ENCODE measurements at regions of chr17 and their contacts with region 1.

Region 1: GRCh38 chr17:80254396-80255251 is 6.0 kb upstream of the RNF213 start:
- DNase-seq: peak; percentile 86
- H3K4me3 Mint-ChIP-seq: peak overlapping the region; percentile 41
- H3K27ac Mint-ChIP-seq: peak overlapping the region; percentile 92
- H3K4me1 Mint-ChIP-seq: peaks cover 71% of the 10 kb centered on the region
- H3K27me3 Mint-ChIP-seq: no peaks in the 10 kb centered on the region

Region 2: DNA sequence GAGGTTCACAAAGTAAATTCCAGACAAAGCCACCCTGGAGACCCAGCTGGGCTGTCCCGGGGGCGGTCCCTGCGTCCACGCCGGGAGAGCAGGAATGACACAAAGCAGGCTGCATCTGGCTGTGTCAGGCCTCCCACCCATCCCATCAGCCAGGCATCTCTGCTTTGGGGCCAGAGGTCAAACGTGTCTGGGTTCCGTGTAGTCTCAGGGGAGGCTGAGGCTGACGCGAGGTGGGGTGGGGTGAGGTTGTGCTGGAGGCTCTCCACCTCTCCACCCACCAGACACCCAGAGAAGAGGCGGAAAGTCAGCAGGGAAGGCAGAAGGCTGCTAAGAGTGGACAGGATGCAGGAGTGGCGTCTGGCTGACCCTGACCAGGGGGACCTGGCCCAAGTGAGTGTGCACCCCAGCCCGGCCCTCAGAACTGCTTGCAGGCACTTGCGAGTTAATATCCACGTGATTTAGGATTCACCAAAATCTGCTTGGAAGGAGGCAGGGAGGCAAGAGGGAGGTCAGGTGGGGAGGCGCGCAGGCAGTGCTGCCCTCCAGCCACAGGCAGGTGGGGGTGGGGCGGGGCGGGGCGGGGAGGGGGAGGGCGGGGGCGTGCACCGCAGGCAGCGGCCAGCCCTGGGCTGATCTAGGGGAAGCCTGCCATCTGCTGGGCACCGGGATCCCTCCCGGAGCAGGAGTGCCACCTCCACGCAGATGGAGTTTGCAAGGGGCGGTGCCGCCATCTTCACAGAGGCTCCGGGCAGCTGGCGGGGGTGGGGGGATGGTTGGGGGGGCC is 263.3 kb before region 1 on chr17:
- CTCF ChIA-PET with region 1: no interaction called
- POLR2A ChIA-PET with region 1: no interaction called
- intact Hi-C with region 1: loop called (anchors 1 kb)
- DNase-seq: peak; percentile 91
- H3K4me3 Mint-ChIP-seq: peak overlapping the region; percentile 71
- H3K27ac Mint-ChIP-seq: no peak overlapping the region
- H3K4me1 Mint-ChIP-seq: peaks cover 26% of the 10 kb centered on the region
- H3K27me3 Mint-ChIP-seq: no peaks in the 10 kb centered on the region

Region 3: DNA sequence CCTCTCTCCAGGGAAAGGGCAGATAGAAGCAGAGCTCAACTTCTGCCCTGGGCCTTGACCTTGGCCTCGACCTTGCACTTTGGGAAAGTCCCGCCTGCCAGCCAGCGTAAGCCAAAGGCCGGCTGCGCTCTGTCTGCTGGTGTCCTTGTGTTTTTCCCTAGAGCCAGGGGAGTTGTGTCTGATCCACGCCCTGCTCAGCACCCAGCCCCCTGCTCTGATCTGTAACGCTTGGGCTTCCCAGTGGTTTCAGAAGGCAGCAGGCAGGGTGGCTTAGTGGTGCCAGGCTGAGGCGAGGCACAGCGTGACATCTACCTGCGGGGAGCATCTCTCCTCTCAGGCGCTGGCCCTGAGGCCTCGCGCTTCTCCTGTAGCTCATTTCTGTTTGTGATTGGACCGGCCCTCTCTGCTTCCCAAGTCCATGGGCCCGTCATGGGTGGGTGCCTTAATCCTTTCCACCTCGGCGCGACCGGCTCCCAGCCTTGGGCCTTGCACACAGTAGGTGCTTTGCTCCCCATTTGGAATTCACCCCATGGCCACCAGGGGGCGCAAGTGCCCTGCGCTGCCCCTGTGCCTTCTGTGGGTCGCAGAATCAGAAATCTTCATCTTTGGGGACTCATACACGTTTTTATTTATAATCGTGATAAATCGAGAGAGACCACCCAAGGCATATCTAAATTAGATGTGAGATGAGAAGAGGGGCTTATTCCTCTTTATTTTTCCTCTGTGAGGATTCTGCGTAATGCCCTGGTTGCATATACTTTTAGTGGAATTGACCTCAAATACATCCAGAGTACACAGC is 58.7 kb before region 1 on chr17:
- CTCF ChIA-PET with region 1: interaction called, 41 read pairs
- POLR2A ChIA-PET with region 1: no interaction called
- intact Hi-C with region 1: loop called (anchors 1 kb)
- DNase-seq: peak; percentile 65
- H3K4me3 Mint-ChIP-seq: no peak overlapping the region
- H3K27ac Mint-ChIP-seq: no peak overlapping the region
- H3K4me1 Mint-ChIP-seq: peaks cover 2% of the 10 kb centered on the region
- H3K27me3 Mint-ChIP-seq: peaks cover 7% of the 10 kb centered on the region

Region 4: GRCh38 chr17:80468242-80468641 is 213.6 kb after region 1 on chr17:
- CTCF ChIA-PET with region 1: no interaction called
- POLR2A ChIA-PET with region 1: no interaction called
- intact Hi-C with region 1: no loop called
- DNase-seq: no peak
- H3K4me3 Mint-ChIP-seq: no peak overlapping the region
- H3K27ac Mint-ChIP-seq: no peak overlapping the region
- H3K4me1 Mint-ChIP-seq: peaks cover 6% of the 10 kb centered on the region
- H3K27me3 Mint-ChIP-seq: peaks cover 54% of the 10 kb centered on the region

Region 5: GRCh38 chr17:81094509-81095382 is 840.1 kb after region 1 on chr17:
- CTCF ChIA-PET with region 1: no interaction called
- POLR2A ChIA-PET with region 1: no interaction called
- intact Hi-C with region 1: loop called (anchors 10 kb)
- DNase-seq: peak; percentile 97
- H3K4me3 Mint-ChIP-seq: no peak overlapping the region
- H3K27ac Mint-ChIP-seq: peak overlapping the region; percentile 75
- H3K4me1 Mint-ChIP-seq: peaks cover 46% of the 10 kb centered on the region
- H3K27me3 Mint-ChIP-seq: no peaks in the 10 kb centered on the region